G401 (cell line): ENCODE measurements at regions of chr3 and their contacts with region 1.

Region 1: GRCh38 chr3:137385922-137386321 is 378.2 kb upstream of the SOX14 start:
- DNase-seq: no peak

Region 2: DNA sequence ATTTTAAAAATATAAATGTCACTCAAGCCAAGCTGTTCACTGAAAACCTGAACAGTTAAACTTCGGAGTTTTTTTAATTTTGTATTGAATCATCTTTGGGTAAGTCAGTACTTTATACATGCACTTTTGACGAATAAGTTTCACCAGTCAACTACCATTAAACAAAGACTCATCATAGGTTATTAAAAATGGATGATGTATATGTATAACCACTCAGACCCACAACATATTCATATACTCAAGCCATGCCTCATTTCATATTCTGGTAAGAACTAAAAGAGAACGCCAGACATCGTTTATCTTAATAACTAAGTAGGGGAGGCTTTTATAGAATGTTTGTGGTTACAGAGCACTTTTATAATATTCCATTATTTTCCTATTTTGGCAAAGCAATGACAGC is 1208.0 kb before region 1 on chr3:
- in situ Hi-C with region 1: no loop called
- DNase-seq: no peak

Region 3: GRCh38 chr3:137013955-137014688 is 371.8 kb before region 1 on chr3:
- in situ Hi-C with region 1: no loop called
- DNase-seq: peak; percentile 93

Region 4: DNA sequence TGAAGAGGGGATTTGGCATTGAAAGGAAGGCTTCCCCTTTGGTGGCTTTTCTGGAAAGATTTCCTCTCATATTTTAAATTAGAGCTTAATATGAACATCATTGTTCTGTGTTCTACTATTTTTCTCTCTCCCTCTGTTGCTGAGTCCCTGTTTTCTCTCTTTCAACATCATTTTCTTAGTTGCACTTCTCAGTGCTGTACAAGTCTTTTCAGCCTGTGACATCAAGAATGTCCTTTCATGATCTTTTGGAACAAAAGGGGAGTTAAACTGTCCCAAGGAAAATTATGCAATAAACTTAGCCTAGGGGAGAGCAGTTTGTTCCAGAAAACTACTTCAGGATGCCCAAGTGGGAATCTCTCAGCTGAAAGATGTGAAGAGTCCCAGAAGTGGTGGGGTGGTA is 103.1 kb before region 1 on chr3:
- in situ Hi-C with region 1: no loop called
- DNase-seq: no peak

Region 5: DNA sequence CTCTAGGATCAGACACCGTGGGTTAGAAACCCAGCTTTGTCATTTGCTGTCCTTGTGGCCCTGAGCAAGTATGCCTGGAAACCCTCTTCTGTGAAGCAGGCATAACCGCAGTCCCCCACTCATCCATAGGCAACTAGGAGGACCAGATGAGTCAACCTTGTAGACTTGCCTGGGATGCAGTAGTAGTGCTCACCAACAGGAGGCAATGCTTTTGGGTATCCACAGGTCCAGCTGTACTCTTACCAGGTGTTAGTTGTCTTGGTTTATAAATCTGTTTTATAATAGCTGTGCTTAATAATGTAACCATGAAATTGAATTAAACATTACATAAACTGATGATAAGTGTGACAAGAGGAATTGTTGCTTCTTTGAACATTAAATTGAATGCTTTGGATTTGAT is 38.8 kb before region 1 on chr3:
- in situ Hi-C with region 1: loop called (anchors 5 kb)
- DNase-seq: no peak

Region 6: DNA sequence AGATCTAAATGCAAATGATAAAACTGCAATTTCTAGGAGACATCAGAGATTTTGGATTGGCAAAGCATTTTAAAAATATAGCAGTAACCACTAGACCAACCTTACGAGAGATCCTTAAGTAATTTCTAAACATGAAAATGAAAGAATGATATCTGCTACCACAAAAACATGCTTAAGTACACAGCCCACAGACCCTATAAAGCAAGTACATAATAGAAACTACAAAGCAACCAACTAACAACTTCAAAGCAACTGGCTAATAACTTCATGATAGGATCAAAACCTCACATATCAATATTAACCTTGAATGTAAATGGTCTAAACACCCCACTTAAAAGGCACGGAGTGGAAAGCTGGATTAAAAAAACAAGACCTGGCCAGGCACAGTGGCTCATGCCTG is 168.3 kb after region 1 on chr3:
- in situ Hi-C with region 1: no loop called
- DNase-seq: no peak